ENCODE measurements at regions of chr7 and their contacts with region 1.

Region 1: DNA sequence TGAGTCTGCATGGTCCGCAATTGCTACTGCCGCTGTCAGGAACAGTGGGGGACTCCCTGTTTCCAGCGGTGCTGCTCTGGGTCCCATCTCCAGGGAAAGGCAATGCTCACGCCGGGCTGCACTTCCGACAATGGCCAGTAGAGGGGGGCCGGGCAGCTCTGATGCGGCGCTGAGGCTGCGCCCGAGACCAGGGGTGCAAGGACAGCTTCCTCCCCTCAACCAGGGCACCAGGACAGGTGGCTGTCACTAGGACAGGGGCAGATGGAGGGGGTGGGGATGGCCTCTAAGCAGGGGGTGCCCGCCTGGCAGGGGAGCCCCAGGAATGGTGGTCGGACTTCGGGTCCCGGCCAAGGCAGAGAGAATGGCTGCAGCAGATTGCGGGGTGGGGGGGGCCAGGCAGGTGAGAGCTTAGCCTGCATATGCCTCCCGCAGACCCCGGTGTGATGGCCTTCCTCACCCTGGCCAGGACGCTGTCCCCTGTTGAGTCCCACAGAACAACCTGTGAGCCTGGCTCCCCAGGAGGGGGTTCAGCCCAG is 71.0 kb upstream of the KCTD7 start:
- DNase-seq: peak; percentile 62
- H3K4me3 Mint-ChIP-seq: no peak overlapping the region
- H3K27ac Mint-ChIP-seq: no peak overlapping the region
- H3K4me1 Mint-ChIP-seq: no peaks in the 10 kb centered on the region
- H3K27me3 Mint-ChIP-seq: no peaks in the 10 kb centered on the region

Region 2: GRCh38 chr7:66307591-66308215 is 250.0 kb before region 1 on chr7:
- intact Hi-C with region 1: no loop called
- DNase-seq: no peak
- H3K4me3 Mint-ChIP-seq: no peak overlapping the region
- H3K27ac Mint-ChIP-seq: no peak overlapping the region
- H3K4me1 Mint-ChIP-seq: no peaks in the 10 kb centered on the region
- H3K27me3 Mint-ChIP-seq: peaks cover 2% of the 10 kb centered on the region

Region 3: DNA sequence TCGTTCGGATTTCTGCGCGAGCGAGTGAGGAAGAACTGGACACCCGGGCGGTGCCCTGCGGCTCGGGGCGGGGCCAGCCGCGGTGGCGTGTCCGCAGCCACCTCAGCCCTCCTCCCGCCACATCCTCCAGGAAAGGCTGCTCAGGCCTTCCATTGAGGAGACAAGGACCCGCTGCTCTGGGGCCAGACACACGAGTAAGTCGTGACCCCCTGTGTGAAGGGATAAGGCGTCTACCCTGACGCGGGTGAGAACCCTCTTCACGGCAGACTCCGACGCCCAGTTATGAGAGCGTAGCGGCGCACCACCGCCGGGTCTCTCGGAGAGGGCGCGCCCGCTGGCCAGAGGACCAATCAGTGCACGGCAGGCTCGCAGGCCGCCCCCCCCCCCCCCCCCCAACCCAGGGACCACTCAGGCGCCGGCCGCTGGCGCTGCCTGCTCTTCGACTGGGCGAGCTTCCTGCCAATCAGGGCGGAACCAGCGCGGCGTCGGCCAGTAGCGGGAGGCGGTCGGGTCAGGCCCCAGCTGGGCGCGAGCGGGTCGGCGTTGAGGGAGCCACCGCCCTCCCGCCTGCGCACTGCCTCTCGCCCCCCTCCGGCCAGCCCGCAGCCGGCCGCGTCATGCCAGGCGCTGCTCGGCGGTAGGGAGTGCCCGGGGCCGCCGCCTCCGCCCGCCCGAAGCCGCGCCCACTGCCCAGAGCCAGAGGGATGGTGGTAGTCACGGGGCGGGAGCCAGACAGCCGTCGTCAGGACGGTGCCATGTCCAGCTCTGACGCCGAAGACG is 70.9 kb after region 1 on chr7 and contains the start of gene KCTD7:
- intact Hi-C with region 1: loop called (anchors 1 kb)
- DNase-seq: peak; percentile 94
- H3K4me3 Mint-ChIP-seq: peak within 1 kb of the TSS; percentile 90
- H3K27ac Mint-ChIP-seq: peak within 1 kb of the TSS; percentile 83
- H3K4me1 Mint-ChIP-seq: peaks cover 39% of the 10 kb centered on the region
- H3K27me3 Mint-ChIP-seq: no peaks in the 10 kb centered on the region
- total RNA-seq, gene KCTD7: 11.0 and 13.8 TPM in 2 replicates

Region 4: GRCh38 chr7:67105377-67105776 is 547.7 kb after region 1 on chr7:
- intact Hi-C with region 1: no loop called
- DNase-seq: no peak
- H3K4me3 Mint-ChIP-seq: no peak overlapping the region
- H3K27ac Mint-ChIP-seq: no peak overlapping the region
- H3K4me1 Mint-ChIP-seq: peaks cover 10% of the 10 kb centered on the region
- H3K27me3 Mint-ChIP-seq: no peaks in the 10 kb centered on the region